Mammary epithelial cell (primary cell): ENCODE measurements at regions of chrX and their contacts with region 1.

Region 1: GRCh38 chrX:149470955-149471354 is 34.2 kb downstream of the IDS start:
- DNase-seq: peak; percentile 52
- H3K4me3 ChIP-seq: peak overlapping the region in 1 of 3 experiments; percentile 10
- H3K27ac ChIP-seq: no peak overlapping the region
- H3K4me1 ChIP-seq: no peaks in the 10 kb centered on the region
- H3K27me3 ChIP-seq: no peaks in the 10 kb centered on the region
- CTCF ChIP-seq: peak; percentile 63 to 79

Region 2: DNA sequence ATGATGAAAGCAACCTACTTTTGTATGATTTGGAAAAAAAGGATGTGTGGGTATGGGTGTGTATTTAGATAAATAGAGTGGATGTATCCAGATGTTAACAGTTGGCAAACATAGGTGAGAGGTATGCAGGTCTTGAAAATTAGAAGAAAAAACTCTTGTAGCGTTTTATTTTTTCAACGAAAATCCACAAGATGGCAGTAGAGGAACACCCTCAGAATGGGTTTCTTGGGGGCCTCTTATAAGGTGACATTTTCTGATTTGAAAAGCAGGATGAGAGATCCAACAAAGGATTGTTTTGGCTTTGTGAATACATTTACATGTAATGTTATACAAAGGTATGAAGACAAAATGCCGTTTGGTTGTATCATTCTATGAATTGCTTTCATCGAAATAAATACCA is 1421.5 kb before region 1 on chrX:
- CTCF ChIA-PET with region 1: no interaction called
- dilution Hi-C with region 1: no loop called
- in situ Hi-C with region 1: no loop called
- intact Hi-C with region 1: loop called (anchors 1 kb)
- DNase-seq: peak; percentile 8
- H3K4me3 ChIP-seq: no peak overlapping the region
- H3K27ac ChIP-seq: no peak overlapping the region
- H3K4me1 ChIP-seq: no peaks in the 10 kb centered on the region
- H3K27me3 ChIP-seq: no peaks in the 10 kb centered on the region
- CTCF ChIP-seq: peak; percentile 28 to 59

Region 3: DNA sequence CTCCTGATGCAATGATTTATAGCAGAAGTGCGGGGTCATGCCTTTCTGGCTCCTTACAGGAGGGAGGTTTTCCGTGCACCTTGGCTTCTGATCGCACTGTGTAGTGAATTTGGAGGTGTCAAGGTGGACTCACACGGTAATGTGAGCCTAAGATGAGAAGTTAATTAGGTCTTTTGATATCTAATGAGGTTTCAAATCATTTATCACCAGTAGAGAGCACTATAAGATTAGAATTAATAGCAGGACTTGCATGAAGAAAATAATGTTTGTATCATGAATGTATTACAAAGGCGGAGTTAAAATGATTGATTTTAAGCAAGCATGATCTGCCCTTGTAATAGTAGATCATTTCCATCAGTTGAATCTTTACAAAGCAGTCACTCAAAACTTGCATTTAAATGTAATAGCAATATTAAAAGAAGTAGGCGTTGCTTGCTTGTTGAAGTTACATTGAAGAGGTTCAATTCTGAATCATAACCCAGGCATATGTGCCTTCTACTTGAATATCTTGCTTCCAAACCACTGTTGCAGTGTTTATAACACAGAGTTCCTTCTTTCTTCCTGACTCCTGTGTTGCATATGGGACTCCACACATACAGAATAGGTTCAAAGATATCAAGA is 1337.7 kb before region 1 on chrX:
- CTCF ChIA-PET with region 1: no interaction called
- dilution Hi-C with region 1: no loop called
- in situ Hi-C with region 1: no loop called
- intact Hi-C with region 1: loop called (anchors 1 kb)
- DNase-seq: peak; percentile 1
- H3K4me3 ChIP-seq: no peak overlapping the region
- H3K27ac ChIP-seq: no peak overlapping the region
- H3K4me1 ChIP-seq: no peaks in the 10 kb centered on the region
- H3K27me3 ChIP-seq: no peaks in the 10 kb centered on the region
- CTCF ChIP-seq: peak in 1 of 2 donors; percentile 13

Region 4: GRCh38 chrX:149151805-149152757 is 318.9 kb before region 1 on chrX:
- CTCF ChIA-PET with region 1: no interaction called
- dilution Hi-C with region 1: no loop called
- in situ Hi-C with region 1: no loop called
- intact Hi-C with region 1: loop called (anchors 5 kb)
- DNase-seq: peak; percentile 91
- H3K4me3 ChIP-seq: no peak overlapping the region
- H3K27ac ChIP-seq: peak overlapping the region; percentile 57
- H3K4me1 ChIP-seq: peaks cover 5% of the 10 kb centered on the region
- H3K27me3 ChIP-seq: no peaks in the 10 kb centered on the region
- CTCF ChIP-seq: no peak

Region 5: DNA sequence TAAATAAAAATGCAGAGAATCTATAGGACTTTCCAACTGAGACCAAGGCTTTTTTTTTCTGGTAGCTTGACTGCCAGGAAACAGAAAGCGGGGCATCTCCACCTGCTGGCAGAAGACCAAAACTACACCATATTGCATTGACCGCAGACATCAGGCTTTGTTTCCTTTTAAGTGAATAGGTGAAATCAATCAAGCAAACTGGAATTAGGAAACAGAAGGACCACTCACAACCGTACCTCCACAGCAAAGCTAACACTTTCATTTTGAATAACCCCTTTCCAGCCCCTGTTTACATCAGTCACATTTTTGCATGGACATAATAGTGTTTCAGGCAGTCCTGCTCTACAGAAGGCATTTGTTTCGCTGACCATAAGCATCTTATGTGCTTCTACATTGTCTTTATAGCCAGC is 184.0 kb before region 1 on chrX:
- CTCF ChIA-PET with region 1: no interaction called
- dilution Hi-C with region 1: no loop called
- in situ Hi-C with region 1: no loop called
- intact Hi-C with region 1: loop called (anchors 5 kb)
- DNase-seq: peak; percentile 33
- H3K4me3 ChIP-seq: no peak overlapping the region
- H3K27ac ChIP-seq: no peak overlapping the region
- H3K4me1 ChIP-seq: no peaks in the 10 kb centered on the region
- H3K27me3 ChIP-seq: no peaks in the 10 kb centered on the region
- CTCF ChIP-seq: peak; percentile 79 to 82

Region 6: DNA sequence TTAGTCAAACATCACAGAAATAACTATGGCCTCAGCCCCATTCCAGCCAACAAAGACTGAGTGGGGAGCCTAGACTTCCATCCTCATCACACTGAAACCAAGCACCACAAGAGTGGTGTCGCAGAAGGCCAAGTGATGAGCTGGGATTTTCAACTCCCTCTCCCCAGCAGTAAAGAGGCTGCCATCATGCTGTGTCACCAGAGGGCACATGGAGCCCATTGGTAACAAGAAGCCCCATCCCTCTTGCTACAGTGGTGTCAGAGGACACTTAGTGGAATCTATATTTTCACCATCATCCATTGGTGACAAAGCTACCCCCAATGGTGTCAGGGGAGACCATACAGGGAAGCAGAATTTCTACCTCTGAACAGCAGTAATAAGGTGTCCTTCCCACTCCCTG is 164.5 kb before region 1 on chrX:
- CTCF ChIA-PET with region 1: no interaction called
- dilution Hi-C with region 1: no loop called
- in situ Hi-C with region 1: no loop called
- intact Hi-C with region 1: loop called (anchors 1 kb)
- DNase-seq: no peak
- H3K4me3 ChIP-seq: no peak overlapping the region
- H3K27ac ChIP-seq: no peak overlapping the region
- H3K4me1 ChIP-seq: no peaks in the 10 kb centered on the region
- H3K27me3 ChIP-seq: no peaks in the 10 kb centered on the region
- CTCF ChIP-seq: no peak

Region 7: DNA sequence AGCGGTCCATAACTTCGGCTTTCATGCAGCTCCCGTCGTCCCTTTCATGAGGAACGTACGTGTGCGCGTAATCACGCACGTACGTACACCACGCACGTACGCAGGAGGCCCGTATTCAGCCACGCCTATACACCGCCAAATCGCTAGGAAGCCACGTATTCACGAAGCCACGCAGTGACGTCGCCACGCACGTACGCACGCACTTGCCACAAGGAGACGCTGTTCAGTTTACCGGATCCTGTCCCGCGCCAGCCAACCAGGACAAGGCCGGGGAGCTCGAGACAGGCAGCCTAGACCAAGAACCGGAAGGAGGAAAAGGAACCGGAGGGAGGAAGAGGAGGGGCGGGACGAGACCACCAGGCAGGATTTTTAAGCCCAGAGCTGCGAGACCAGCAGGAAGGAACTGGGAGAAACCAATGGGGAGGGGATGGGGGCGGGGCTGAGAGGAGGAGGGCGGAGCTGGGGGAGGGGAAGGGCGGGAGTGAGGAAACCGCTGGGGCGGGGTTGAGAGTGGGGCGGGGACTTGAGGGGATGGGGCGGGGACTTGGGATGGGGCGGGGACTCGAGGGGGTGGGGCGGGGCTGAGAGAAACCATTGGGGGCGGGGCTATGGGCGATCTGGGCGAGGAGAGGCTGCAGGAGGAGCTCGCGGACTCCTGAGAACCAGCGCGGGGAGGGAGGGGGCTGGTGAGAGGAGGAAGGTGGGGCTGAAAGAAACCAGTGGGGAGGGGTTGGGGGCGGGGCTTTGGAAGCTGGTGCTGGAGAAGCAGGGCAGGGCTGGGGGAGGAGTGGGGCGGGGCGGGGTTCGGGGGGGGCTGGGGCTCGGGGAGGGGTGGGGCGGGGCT is 467.7 kb after region 1 on chrX and contains the start of gene EOLA2:
- CTCF ChIA-PET with region 1: interaction called, 14 read pairs
- dilution Hi-C with region 1: no loop called
- in situ Hi-C with region 1: no loop called
- intact Hi-C with region 1: no loop called
- DNase-seq: peak; percentile 95
- H3K4me3 ChIP-seq: peak within 1 kb of the TSS; percentile 48 to 82 (median 54)
- H3K27ac ChIP-seq: peak within 1 kb of the TSS; percentile 82
- H3K4me1 ChIP-seq: no peaks in the 10 kb centered on the region
- H3K27me3 ChIP-seq: no peaks in the 10 kb centered on the region
- CTCF ChIP-seq: peak; percentile 41 to 74
- total RNA-seq, gene EOLA2: 32.8 to 39.8 TPM